Dorsolateral prefrontal cortex (tissue), 120 donors: ENCODE measurements at regions of chr3 and their contacts with region 1.

Region 1: DNA sequence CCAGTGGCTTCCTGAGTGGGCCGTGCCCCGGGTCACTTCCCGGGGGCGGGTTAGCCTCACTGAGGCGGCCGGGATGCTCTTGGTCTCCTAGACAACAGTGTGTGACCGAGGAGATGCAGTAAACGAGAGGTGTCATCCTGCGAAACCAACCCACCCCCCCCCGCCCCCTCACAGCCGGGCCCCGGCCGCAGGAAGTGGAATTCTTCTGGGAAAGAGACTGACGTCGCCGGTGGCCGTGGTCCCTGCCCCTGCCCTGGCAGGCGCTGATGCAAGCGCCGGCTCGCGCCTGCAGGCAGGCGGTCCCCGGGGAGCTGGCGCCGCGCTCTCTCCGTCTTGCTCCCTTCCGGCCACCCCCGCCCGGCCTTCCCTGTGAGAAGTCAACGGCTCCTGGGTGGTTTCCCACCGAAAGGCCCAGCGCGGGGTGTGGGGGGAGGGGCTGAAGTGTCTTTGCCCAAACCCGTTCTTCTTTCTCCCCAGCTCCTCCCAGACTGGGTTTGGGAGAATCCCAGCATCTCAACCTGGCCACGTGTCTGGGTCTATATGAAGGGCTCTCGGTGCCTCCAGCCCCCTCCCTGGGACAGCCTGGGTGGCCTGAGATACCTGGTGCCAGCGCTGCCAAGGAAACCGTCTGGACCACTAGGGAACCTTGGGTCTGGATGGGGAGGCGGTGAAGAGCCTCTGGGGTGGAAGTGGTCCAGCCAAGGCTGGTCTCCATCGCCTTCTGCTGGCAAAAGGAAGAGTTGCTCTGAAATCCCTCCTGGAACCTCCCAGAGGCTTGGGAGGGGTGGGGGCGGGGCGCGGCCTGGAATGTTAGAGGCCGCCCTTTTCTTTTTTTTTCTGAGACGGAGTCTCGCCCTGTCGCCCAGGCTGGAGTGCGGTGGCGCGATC is 47.3 kb downstream of the BHLHE40 start:
- DNase-seq: peak; percentile 42 to 83 (median 74)
- H3K4me3 ChIP-seq: peak overlapping the region; percentile 31 to 78 (median 63)
- H3K27ac ChIP-seq: peak overlapping the region in 56 of 59 donors; percentile 33 to 93 (median 85)
- H3K27me3 ChIP-seq: no peaks in the 10 kb centered on the region
- CTCF ChIP-seq: peak; percentile 18 to 74 (median 57)

Region 2: GRCh38 chr3:4722103-4722502 is 304.5 kb before region 1 on chr3:
- intact Hi-C with region 1: loop called in 1 of 2 experiments (anchors 5 kb)
- DNase-seq: peak in 2 of 10 donors; percentile 30 to 42
- H3K4me3 ChIP-seq: no peak overlapping the region
- H3K27ac ChIP-seq: peak overlapping the region in 56 of 59 donors; percentile 3 to 89 (median 78)
- H3K27me3 ChIP-seq: no peaks in the 10 kb centered on the region
- CTCF ChIP-seq: peak in 53 of 56 donors; percentile 24 to 65 (median 50)

Region 3: DNA sequence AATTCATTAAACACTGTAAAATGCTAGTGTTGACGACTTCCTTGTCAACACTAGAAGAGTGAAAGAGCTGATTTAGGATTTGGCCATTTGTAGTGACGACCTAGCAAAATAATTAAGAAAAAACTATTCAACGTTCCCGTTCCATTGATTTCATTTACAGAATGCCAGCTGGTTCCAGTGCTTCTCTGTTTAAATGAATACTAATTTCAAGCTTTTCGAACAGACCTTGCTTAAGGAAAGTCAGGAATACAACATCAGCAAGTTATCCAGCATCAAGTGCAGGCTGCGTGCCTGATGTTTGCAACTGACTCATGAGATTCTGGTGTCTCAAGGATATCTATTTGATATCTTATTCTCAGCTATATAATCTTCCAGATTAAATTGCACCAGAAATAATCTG is 145.7 kb before region 1 on chr3:
- intact Hi-C with region 1: no loop called
- DNase-seq: no peak
- H3K4me3 ChIP-seq: no peak overlapping the region
- H3K27ac ChIP-seq: no peak overlapping the region
- H3K27me3 ChIP-seq: no peaks in the 10 kb centered on the region
- CTCF ChIP-seq: no peak

Region 4: DNA sequence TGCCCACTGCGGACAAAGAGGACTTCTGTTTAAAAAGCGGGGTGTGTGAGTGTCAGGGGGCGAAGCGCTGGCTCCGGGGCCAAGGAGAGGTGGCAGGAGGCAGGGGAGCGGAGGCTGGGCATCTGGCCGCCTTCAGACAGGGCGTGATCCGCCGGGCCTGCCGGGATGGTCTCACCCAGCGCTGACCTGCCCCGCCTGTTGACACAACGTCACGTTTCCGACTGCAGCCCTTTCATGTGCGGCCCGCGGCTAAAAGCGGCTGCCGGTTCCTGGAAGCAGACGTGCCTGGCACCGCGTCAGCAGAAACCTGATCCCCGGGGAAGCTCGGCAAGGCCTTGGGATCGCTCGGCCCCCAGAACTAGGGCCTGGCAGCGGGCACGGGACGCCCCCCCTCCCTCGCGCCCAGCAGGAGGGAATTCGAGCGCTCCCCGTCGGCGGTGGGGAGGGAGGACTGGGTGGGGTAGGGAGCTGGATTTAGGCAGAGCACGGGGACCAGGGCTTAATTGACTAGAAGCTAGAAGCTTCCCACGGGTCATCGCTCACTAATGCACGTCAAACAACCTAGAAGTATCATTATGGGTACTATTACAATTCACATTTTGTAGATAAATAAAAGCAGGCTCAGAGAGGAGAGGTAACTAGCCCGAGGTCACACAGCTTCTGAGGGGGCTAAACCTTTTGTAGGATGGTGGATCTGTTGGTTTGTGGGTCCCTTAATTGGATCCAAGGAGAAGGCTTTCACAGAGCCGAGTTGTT is 39.6 kb before region 1 on chr3:
- intact Hi-C with region 1: loop called in 1 of 2 experiments (anchors 5 kb)
- DNase-seq: peak; percentile 39 to 84 (median 74)
- H3K4me3 ChIP-seq: peak overlapping the region; percentile 33 to 97 (median 57)
- H3K27ac ChIP-seq: peak overlapping the region in 58 of 59 donors; percentile 11 to 99 (median 96)
- H3K27me3 ChIP-seq: no peaks in the 10 kb centered on the region
- CTCF ChIP-seq: peak in 7 of 56 donors; percentile 4 to 27 (median 13)

Region 5: GRCh38 chr3:5115506-5116162 is 89.1 kb after region 1 on chr3:
- intact Hi-C with region 1: no loop called
- DNase-seq: no peak
- H3K4me3 ChIP-seq: no peak overlapping the region
- H3K27ac ChIP-seq: peak overlapping the region in 1 of 59 donors; percentile 26
- H3K27me3 ChIP-seq: no peaks in the 10 kb centered on the region
- CTCF ChIP-seq: no peak

Region 6: DNA sequence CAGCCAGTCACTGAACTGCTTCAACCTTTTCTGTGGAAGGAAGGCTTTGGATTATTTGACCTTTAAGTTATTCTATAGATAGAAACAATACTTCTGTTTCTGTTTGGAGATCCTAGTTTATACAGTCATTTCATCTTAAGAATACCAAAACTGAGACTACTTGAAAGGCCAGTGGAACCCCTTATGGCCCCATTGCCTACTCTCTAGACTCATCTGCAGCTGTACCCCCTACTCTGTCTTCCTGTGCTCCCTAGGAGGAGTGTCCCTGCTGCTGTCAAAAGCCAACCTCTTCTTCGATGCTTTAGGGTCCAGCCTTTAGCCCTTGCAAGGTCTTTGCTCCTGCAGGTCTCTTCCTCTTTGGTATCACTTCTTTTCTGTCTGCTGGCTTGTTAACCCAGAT is 330.5 kb after region 1 on chr3:
- intact Hi-C with region 1: no loop called
- DNase-seq: no peak
- H3K4me3 ChIP-seq: no peak overlapping the region
- H3K27ac ChIP-seq: peak overlapping the region in 5 of 59 donors; percentile 10 to 34 (median 28)
- H3K27me3 ChIP-seq: peaks cover 0 to 5% (median 0%) of the 10 kb centered on the region in 45 donors
- CTCF ChIP-seq: no peak